Activated B cell treated with CpG ODN at 0.5 μM for 24 hours (primary cell): ENCODE measurements at regions of chr6 and their contacts with region 1.

Region 1: DNA sequence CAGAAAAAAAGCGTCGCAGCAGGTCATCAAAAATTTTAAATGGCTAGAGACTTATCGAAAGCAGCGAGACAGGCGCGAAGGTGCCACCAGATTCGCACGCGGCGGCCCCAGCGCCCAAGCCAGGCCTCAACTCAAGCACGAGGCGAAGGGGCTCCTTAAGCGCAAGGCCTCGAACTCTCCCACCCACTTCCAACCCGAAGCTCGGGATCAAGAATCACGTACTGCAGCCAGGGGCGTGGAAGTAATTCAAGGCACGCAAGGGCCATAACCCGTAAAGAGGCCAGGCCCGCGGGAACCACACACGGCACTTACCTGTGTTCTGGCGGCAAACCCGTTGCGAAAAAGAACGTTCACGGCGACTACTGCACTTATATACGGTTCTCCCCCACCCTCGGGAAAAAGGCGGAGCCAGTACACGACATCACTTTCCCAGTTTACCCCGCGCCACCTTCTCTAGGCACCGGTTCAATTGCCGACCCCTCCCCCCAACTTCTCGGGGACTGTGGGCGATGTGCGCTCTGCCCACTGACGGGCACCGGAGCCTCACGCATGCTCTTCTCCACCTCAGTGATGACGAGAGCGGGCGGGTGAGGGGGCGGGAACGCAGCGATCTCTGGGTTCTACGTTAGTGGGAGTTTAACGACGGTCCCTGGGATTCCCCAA is at the start of gene EEF1A1:
- DNase-seq: peak; percentile 91
- ATAC-seq: peak; percentile 79
- H3K4me3 Mint-ChIP-seq: peak within 1 kb of the TSS; percentile 96
- H3K27ac Mint-ChIP-seq: peak within 1 kb of the TSS; percentile 98
- H3K4me1 Mint-ChIP-seq: peaks cover 65% of the 10 kb centered on the region
- H3K27me3 Mint-ChIP-seq: no peaks in the 10 kb centered on the region
- CTCF ChIP-seq: no peak
- total RNA-seq, gene EEF1A1: 19,962 and 22,096 TPM in 2 replicates

Region 2: DNA sequence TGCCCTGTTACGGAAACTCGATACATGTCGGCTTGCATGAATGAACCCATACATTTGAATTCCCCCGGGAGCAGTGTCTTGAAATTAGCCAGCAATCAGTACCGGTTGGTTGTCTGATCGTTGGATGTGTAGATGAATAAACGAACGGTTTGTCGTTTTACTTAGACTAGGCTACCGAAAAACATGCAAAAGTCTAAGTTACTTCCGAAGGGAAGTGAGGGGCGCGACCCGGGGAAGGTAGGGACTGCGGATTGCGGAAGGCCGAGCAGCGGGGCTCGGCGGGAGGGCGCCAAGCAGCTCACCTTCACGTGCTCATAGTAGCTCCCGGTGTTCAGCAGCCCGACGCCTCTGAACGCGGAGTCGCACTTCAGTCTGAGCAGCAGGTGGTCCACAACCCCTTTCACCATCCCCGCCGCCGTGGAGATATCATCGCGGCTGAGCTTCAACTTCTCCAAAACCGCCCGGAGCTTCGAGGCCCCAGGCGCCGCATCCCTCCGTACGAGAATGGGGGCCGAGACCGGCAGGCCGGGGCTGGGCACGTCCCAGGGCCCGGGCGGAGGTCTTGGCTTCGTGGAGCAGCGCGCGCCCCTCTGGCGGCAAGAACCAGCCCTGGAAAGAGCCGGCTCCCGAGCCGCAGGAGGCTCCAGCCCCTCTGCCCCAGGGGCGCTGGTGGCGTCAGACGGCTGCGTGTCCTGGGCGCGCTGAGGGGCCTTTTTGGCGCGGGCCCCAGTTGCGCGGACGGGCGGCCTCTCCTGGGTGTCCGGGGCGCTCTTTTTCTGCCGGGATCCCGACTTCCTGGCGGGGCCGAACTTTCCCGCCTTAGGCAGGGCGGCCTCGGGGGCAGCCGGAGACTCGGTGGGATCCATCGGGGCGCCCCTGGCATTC is 69.4 kb before region 1 on chr6:
- CTCF ChIA-PET with region 1: no interaction called
- POLR2A ChIA-PET with region 1: interaction called, 72 read pairs
- intact Hi-C with region 1: loop called (anchors 1 kb)
- DNase-seq: peak; percentile 54
- ATAC-seq: peak; percentile 59
- H3K4me3 Mint-ChIP-seq: peak overlapping the region; percentile 93
- H3K27ac Mint-ChIP-seq: peak overlapping the region; percentile 91
- H3K4me1 Mint-ChIP-seq: peaks cover 22% of the 10 kb centered on the region
- H3K27me3 Mint-ChIP-seq: no peaks in the 10 kb centered on the region
- CTCF ChIP-seq: no peak

Region 3: DNA sequence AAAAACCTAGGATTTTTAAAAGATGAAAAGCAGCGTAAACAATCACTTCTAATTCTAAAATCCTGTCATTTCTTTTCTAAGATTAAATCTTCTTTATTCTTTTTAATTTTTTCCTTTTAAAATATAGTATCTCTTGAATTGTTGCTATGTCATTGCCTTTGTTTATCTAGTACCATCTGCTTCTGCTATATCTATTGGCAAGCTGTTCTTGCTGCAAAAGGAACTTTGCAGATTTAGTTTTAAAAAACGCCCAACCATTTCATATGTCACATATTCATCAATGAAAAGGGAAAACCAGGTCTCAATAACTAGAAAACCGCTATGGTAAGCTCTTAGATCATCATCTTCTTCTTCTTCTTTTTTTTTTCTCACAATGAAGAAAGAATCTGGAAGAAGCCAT is 11.5 kb after region 1 on chr6:
- CTCF ChIA-PET with region 1: no interaction called
- POLR2A ChIA-PET with region 1: interaction called, 34 read pairs
- intact Hi-C with region 1: no loop called
- DNase-seq: no peak
- ATAC-seq: no peak
- H3K4me3 Mint-ChIP-seq: no peak overlapping the region
- H3K27ac Mint-ChIP-seq: no peak overlapping the region
- H3K4me1 Mint-ChIP-seq: no peaks in the 10 kb centered on the region
- H3K27me3 Mint-ChIP-seq: no peaks in the 10 kb centered on the region
- CTCF ChIP-seq: no peak

Region 4: DNA sequence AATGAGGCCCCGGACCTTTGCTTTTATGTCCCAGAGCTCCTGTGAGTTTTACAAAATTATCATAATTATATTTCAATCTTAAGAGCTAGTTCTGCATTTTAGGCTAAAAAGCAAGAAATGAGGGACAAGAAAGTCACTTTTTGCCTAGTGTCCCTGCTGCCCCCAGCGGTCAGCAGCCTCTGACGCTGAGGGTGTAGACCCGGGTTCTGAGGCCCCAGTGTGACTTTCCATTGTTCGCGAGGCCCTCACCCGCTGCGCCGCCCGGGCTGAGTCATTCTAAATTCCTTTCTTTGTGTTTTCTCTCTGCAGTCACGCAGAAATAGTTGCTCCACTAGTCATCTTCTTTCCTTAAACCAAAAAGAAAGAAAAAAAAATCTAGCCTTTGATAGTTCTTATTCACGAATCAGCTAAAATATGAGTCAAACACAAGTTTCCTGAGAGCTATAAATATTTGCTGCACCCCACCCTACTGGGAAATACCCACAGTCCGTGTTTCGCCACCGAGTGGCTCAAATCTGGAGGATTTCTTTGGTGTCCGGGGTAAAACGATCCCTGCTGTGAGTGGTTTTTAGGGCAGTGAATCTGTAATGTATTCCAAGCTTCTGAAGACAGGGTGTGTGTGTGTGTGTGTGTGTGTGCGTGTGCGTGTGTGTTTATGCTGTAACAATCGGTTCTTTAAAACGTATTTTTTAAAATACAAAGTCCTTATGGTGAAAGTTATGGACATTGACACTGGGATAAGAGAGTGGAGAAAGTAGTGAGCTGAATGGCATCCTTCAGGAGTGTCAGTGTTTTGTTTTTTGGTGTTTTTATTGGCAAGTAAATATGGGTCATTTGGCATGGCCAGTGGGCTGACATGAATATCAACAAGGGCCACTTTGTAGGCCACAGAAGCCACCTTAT is 59.7 kb after region 1 on chr6:
- CTCF ChIA-PET with region 1: interaction called, 14 read pairs
- POLR2A ChIA-PET with region 1: interaction called, 301 read pairs
- intact Hi-C with region 1: loop called (anchors 1 kb)
- DNase-seq: peak; percentile 54
- ATAC-seq: peak; percentile 74
- H3K4me3 Mint-ChIP-seq: peak overlapping the region; percentile 80
- H3K27ac Mint-ChIP-seq: peak overlapping the region; percentile 98
- H3K4me1 Mint-ChIP-seq: peaks cover 48% of the 10 kb centered on the region
- H3K27me3 Mint-ChIP-seq: no peaks in the 10 kb centered on the region
- CTCF ChIP-seq: no peak

Region 5: GRCh38 chr6:73610444-73611275 is 89.8 kb after region 1 on chr6:
- CTCF ChIA-PET with region 1: interaction called, 64 read pairs
- POLR2A ChIA-PET with region 1: interaction called, 86 read pairs
- intact Hi-C with region 1: loop called (anchors 1 kb)
- DNase-seq: no peak
- ATAC-seq: peak; percentile 67
- H3K4me3 Mint-ChIP-seq: no peak overlapping the region
- H3K27ac Mint-ChIP-seq: no peak overlapping the region
- H3K4me1 Mint-ChIP-seq: peaks cover 5% of the 10 kb centered on the region
- H3K27me3 Mint-ChIP-seq: no peaks in the 10 kb centered on the region
- CTCF ChIP-seq: no peak

Region 6: GRCh38 chr6:74100719-74101287 is 580.0 kb after region 1 on chr6:
- CTCF ChIA-PET with region 1: no interaction called
- POLR2A ChIA-PET with region 1: no interaction called
- intact Hi-C with region 1: no loop called
- DNase-seq: no peak
- ATAC-seq: no peak
- H3K4me3 Mint-ChIP-seq: no peak overlapping the region
- H3K27ac Mint-ChIP-seq: no peak overlapping the region
- H3K4me1 Mint-ChIP-seq: no peaks in the 10 kb centered on the region
- H3K27me3 Mint-ChIP-seq: no peaks in the 10 kb centered on the region
- CTCF ChIP-seq: no peak

Region 7: GRCh38 chr6:74114428-74114827 is 593.6 kb after region 1 on chr6:
- CTCF ChIA-PET with region 1: no interaction called
- POLR2A ChIA-PET with region 1: no interaction called
- intact Hi-C with region 1: no loop called
- DNase-seq: no peak
- ATAC-seq: no peak
- H3K4me3 Mint-ChIP-seq: no peak overlapping the region
- H3K27ac Mint-ChIP-seq: no peak overlapping the region
- H3K4me1 Mint-ChIP-seq: no peaks in the 10 kb centered on the region
- H3K27me3 Mint-ChIP-seq: no peaks in the 10 kb centered on the region
- CTCF ChIP-seq: no peak

Region 8: DNA sequence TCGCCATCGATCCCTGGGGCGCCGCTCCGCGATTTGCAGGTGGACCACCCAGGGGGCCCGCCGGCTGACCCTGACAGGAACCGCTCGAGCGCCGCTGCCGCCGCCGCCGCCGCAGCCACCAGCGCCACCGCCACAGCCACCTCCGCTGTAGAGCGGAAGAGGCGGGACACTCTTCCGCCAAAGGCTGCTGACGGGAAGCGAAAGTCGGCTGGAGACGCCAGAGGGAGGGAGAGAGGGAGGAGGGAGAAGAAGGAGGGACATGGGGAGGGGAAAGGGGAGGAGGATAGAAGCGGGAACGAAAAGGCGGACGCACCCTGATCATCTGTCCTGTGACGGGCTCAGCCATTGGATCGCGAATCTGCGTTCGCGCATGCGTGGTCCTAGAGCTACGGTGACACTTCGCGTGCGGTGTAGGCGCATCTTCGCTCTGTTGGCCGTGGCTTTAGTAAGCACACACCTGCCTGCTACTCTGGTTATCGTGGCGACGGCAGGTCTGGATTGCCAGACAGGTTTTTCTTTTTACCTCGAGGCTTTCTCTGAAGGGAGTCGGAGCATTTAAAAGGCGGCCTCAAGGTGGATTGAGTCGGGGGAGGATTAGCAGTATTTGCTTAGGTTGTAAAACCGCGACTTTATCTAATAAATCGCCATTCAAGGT is 1763.9 kb after region 1 on chr6 and contains the start of gene TMEM30A:
- CTCF ChIA-PET with region 1: no interaction called
- POLR2A ChIA-PET with region 1: no interaction called
- intact Hi-C with region 1: loop called (anchors 2 kb)
- DNase-seq: peak; percentile 84
- ATAC-seq: peak; percentile 96
- H3K4me3 Mint-ChIP-seq: no peak within 1 kb of the TSS
- H3K27ac Mint-ChIP-seq: no peak within 1 kb of the TSS
- H3K4me1 Mint-ChIP-seq: peaks cover 27% of the 10 kb centered on the region
- H3K27me3 Mint-ChIP-seq: no peaks in the 10 kb centered on the region
- CTCF ChIP-seq: no peak
- total RNA-seq, gene TMEM30A: 36.8 and 38.7 TPM in 2 replicates